ENCODE measurements at regions of chr5 and their contacts with region 1.

Region 1: GRCh38 chr5:146369691-146370090 is 31.1 kb downstream of the POU4F3 start:
- DNase-seq: no peak
- H3K4me3 ChIP-seq: no peak overlapping the region
- H3K27me3 ChIP-seq: no peaks in the 10 kb centered on the region; the same call in 1 of the 2 replicates
- CTCF ChIP-seq: no peak

Region 2: GRCh38 chr5:144467792-144468191 is 1901.9 kb before region 1 on chr5:
- CTCF ChIA-PET with region 1: no interaction called
- POLR2A ChIA-PET with region 1: interaction called, 10 read pairs
- DNase-seq: no peak
- H3K4me3 ChIP-seq: no peak overlapping the region
- H3K27me3 ChIP-seq: no peaks in the 10 kb centered on the region
- CTCF ChIP-seq: peak; percentile 75

Region 3: DNA sequence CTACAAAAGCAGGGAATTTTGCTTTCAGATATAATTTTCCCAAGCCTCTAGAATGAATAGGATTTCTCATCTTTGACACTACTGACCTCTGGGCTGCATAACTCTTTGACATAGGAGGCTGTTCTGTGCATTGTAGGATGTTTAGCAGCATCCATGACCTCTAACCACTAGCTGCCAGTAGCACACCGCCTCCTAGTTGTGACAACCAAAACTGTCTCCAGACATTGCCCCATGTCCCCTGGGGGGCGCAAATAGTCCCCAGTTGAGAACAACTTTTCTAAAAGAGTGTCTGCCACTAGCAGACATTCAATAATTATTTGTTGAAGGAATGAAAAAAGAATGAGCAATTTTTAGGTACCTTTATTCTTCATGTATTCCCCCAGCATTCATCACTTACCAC is 20.8 kb after region 1 on chr5:
- CTCF ChIA-PET with region 1: no interaction called
- POLR2A ChIA-PET with region 1: no interaction called
- DNase-seq: no peak
- H3K4me3 ChIP-seq: no peak overlapping the region
- H3K27me3 ChIP-seq: peaks cover 4% of the 10 kb centered on the region
- CTCF ChIP-seq: no peak

Region 4: GRCh38 chr5:146401021-146401420 is 31.3 kb after region 1 on chr5:
- CTCF ChIA-PET with region 1: no interaction called
- POLR2A ChIA-PET with region 1: no interaction called
- DNase-seq: no peak
- H3K4me3 ChIP-seq: no peak overlapping the region
- H3K27me3 ChIP-seq: peaks cover 3% of the 10 kb centered on the region
- CTCF ChIP-seq: no peak

Measured in BJ (cell line).